ENCODE measurements at regions of chrX and their contacts with region 1.

Region 1: DNA sequence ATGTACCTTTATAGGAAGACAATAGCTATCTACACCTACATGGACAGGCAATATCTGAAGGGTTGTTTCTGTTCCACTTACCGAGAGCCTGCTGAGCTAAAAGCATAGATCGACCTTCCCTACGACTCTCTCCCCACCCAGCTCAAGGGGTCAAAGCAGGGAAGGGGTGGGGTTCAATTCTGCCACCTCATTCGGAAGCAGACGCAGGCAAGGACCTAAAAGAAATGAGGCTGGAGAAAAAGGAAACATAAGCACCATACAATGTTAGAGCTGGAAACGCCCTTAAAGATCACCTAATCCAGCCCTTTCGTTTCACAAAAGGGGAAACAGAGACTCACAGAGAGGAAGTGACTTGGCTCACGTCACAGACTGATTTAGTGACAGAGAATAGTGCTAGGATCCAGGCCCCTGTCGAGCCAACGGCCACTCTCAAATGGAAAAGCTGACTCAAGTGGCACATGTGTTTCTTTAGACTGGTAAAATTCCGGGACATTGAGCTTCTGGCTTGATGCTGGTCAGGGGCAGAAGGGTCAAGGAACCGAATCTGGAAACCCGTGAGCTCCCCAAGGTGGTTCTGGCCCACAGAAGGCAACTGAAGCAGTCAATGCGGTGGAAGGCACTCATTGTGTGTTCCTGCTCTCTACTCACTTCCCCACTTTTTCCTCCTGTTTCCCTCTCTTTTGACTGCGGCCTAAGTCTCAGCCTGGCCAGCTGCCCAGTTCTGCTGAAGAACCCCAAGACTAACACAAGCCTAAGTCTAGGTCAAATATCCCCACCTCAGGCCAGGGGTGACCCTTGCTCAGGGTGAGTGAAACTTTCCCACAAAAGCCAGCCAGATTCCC is 7.5 kb downstream of the SEPTIN6 start:
- DNase-seq: no peak
- ATAC-seq: peak; percentile 65
- H3K4me3 Mint-ChIP-seq: peak overlapping the region; percentile 83
- H3K27ac Mint-ChIP-seq: peak overlapping the region; percentile 99
- H3K4me1 Mint-ChIP-seq: peaks cover 89% of the 10 kb centered on the region
- H3K27me3 Mint-ChIP-seq: no peaks in the 10 kb centered on the region
- CTCF ChIP-seq: no peak

Region 2: GRCh38 chrX:119638725-119639471 is 46.5 kb before region 1 on chrX:
- CTCF ChIA-PET with region 1: no interaction called
- POLR2A ChIA-PET with region 1: interaction called, 42 read pairs
- intact Hi-C with region 1: loop called (anchors 2 kb)
- DNase-seq: no peak
- ATAC-seq: peak; percentile 73
- H3K4me3 Mint-ChIP-seq: peak overlapping the region; percentile 56
- H3K27ac Mint-ChIP-seq: peak overlapping the region; percentile 93
- H3K4me1 Mint-ChIP-seq: peaks cover 62% of the 10 kb centered on the region
- H3K27me3 Mint-ChIP-seq: no peaks in the 10 kb centered on the region
- CTCF ChIP-seq: no peak

Region 3: DNA sequence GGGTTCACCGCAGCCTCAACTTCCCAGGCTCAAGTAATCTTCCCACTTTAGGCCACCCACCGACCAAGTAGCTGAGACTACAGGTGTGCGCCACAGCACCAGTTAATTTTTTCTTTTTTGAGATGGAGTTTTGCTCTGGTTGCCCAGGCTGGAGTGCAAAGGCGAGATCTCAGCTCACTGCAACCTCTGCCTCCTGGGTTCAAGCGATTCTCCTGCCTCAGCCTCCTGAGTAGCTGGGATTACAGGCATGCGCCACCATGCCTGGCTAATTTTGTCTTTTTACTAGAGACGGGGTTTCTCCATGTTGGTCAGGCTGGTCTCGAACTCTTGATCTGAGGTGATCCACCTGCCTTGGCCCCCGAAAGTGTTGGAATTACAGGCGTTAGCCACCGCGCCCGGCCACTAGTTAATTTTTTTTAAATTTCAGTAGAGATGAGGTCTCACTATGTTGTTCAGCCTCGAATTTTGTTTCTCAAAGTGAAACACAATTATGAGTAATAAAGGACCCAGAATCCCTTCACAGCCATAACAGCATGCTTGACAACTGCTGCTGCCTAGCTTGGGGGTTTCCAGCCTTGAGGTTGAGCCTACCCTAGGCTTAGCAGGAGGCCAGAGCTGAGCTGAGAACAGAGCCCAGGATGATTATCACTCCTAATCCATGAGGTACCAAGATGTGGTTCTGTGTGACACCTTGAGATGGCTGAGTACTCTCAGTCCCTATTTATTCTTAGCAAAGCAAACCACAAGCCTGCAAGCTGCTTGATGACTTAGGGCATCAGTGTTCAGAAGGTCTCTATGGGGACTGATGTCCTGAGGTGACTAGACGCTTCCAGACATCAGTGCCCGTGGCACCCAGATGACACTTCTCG is 37.7 kb before region 1 on chrX:
- CTCF ChIA-PET with region 1: no interaction called
- POLR2A ChIA-PET with region 1: interaction called, 24 read pairs
- intact Hi-C with region 1: no loop called
- DNase-seq: no peak
- ATAC-seq: peak; percentile 89
- H3K4me3 Mint-ChIP-seq: peak overlapping the region; percentile 45
- H3K27ac Mint-ChIP-seq: peak overlapping the region; percentile 93
- H3K4me1 Mint-ChIP-seq: peaks cover 28% of the 10 kb centered on the region
- H3K27me3 Mint-ChIP-seq: no peaks in the 10 kb centered on the region
- CTCF ChIP-seq: no peak